ENCODE measurements at regions of chr9 and their contacts with region 1.

Region 1: GRCh38 chr9:135890181-135891026 is 16.9 kb downstream of the CAMSAP1 start:
- DNase-seq: no peak

Region 2: GRCh38 chr9:133972041-133972941 is 1918.1 kb before region 1 on chr9:
- intact Hi-C with region 1: loop called in 1 of 2 experiments (anchors 5 kb)
- DNase-seq: peak; percentile 78

Region 3: GRCh38 chr9:135605238-135605781 is 285.1 kb before region 1 on chr9:
- intact Hi-C with region 1: no loop called
- DNase-seq: peak; percentile 77

Region 4: GRCh38 chr9:135864447-135865049 is 25.9 kb before region 1 on chr9:
- intact Hi-C with region 1: no loop called
- DNase-seq: peak; percentile 87

Region 5: GRCh38 chr9:135951889-135952663 is 61.7 kb after region 1 on chr9:
- intact Hi-C with region 1: no loop called
- DNase-seq: no peak

Measured in posterior vena cava (tissue), 2 donors.